ENCODE measurements at regions of chr11 and their contacts with region 1.

Region 1: GRCh38 chr11:123478352-123478987 is 48.4 kb downstream of the GRAMD1B start:
- DNase-seq: peak; percentile 71
- H3K4me3 Mint-ChIP-seq: no peak overlapping the region
- H3K27ac Mint-ChIP-seq: no peak overlapping the region
- H3K4me1 Mint-ChIP-seq: peaks cover 15% of the 10 kb centered on the region
- H3K27me3 Mint-ChIP-seq: no peaks in the 10 kb centered on the region
- CTCF ChIP-seq: peak; percentile 73

Region 2: DNA sequence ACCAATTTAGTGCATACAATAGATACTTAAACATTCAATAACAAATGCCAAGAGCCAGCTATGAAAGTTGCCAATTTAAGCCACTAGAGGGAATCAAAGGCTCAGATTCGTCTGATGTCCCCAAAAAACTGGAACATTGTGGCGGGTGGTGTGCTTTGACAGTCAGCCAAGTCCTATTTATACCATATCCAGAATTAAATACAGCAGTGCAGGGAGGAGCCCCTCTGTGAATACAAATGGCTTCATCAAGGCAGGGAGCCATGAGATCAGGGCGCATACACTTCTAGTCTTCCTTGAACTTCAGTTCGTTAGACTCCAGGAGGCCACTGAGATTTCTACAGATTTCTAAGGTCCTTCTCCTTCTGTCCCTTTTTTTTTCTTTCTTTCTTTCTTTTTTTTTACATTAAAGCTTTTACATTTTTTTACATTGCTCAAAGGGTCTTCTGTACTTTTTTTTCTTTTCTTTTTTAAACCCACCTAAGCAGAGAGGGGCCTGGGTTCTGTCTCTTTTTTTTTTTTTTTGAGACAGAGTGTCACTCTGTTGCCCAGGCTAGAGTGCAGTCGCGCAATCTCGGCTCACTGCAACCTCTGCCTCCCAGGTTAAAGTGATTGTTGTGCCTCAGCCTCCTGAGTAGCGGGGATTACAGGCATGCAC is 375.0 kb before region 1 on chr11:
- CTCF ChIA-PET with region 1: interaction called, 23 read pairs
- POLR2A ChIA-PET with region 1: no interaction called
- intact Hi-C with region 1: loop called (anchors 1 kb)
- DNase-seq: peak; percentile 69
- H3K4me3 Mint-ChIP-seq: no peak overlapping the region
- H3K27ac Mint-ChIP-seq: no peak overlapping the region
- H3K4me1 Mint-ChIP-seq: peaks cover 9% of the 10 kb centered on the region
- H3K27me3 Mint-ChIP-seq: no peaks in the 10 kb centered on the region
- CTCF ChIP-seq: peak; percentile 41

Region 3: GRCh38 chr11:123261345-123262106 is 216.9 kb before region 1 on chr11:
- CTCF ChIA-PET with region 1: interaction called, 14 read pairs
- POLR2A ChIA-PET with region 1: no interaction called
- intact Hi-C with region 1: no loop called
- DNase-seq: peak; percentile 80
- H3K4me3 Mint-ChIP-seq: peak overlapping the region; percentile 49
- H3K27ac Mint-ChIP-seq: no peak overlapping the region
- H3K4me1 Mint-ChIP-seq: no peaks in the 10 kb centered on the region
- H3K27me3 Mint-ChIP-seq: peaks cover 25% of the 10 kb centered on the region
- CTCF ChIP-seq: peak; percentile 90

Region 4: GRCh38 chr11:123301696-123302400 is 176.6 kb before region 1 on chr11:
- CTCF ChIA-PET with region 1: interaction called, 7 read pairs
- POLR2A ChIA-PET with region 1: no interaction called
- intact Hi-C with region 1: loop called (anchors 1 kb)
- DNase-seq: peak; percentile 40
- H3K4me3 Mint-ChIP-seq: no peak overlapping the region
- H3K27ac Mint-ChIP-seq: no peak overlapping the region
- H3K4me1 Mint-ChIP-seq: no peaks in the 10 kb centered on the region
- H3K27me3 Mint-ChIP-seq: peaks cover 20% of the 10 kb centered on the region
- CTCF ChIP-seq: peak; percentile 70

Region 5: DNA sequence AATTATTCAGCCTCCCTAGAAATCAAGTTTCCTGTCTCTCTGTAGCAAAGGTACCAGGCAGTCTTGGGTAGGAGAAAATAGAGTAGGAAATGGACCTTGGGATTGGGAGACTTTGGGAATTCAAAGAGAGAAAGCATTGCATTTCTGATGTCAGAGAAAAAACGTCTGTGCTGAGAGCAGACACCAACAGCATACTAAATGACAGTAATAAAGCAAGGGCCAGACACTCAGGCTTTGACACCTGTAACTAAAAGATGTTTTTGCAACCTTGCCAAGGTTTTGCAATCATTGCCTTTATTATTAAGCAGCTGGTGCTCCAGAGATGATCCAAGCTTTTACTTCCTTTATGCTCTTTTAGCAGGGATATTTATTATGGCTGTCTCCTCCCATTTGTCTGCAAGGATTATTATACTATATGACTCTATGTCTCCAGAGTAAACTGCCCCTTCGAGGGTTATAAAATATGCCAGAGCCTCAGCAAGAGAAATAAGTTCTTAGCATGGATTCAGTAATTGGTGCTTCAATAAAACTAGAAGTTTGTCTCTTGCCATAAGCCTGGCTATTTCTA is 133.6 kb before region 1 on chr11:
- CTCF ChIA-PET with region 1: no interaction called
- POLR2A ChIA-PET with region 1: no interaction called
- intact Hi-C with region 1: no loop called
- DNase-seq: peak; percentile 7
- H3K4me3 Mint-ChIP-seq: no peak overlapping the region
- H3K27ac Mint-ChIP-seq: no peak overlapping the region
- H3K4me1 Mint-ChIP-seq: no peaks in the 10 kb centered on the region
- H3K27me3 Mint-ChIP-seq: peaks cover 30% of the 10 kb centered on the region
- CTCF ChIP-seq: no peak

Region 6: GRCh38 chr11:123461164-123461563 is 17.3 kb before region 1 on chr11:
- CTCF ChIA-PET with region 1: interaction called, 18 read pairs
- POLR2A ChIA-PET with region 1: no interaction called
- intact Hi-C with region 1: no loop called
- DNase-seq: peak; percentile 85
- H3K4me3 Mint-ChIP-seq: no peak overlapping the region
- H3K27ac Mint-ChIP-seq: no peak overlapping the region
- H3K4me1 Mint-ChIP-seq: no peaks in the 10 kb centered on the region
- H3K27me3 Mint-ChIP-seq: no peaks in the 10 kb centered on the region
- CTCF ChIP-seq: no peak

Region 7: DNA sequence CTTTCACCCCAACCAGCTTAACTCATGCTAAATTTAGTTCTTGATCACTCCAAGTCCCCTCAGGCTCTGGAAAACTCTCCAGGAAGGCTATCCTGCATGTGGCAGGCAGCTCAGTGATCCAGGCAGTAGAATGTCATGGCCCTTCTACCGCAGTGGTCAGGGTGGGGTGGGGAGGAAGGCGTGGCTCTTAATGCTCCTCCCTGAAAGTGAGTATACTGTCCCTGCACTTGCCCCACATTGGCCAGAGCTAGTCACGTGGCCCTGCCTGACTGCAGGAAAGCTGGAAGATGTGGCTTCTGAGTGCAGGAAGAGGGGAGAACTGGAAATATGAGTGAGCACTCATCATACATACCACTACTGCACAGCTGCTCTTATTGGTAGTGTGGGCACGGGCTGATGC is 53.7 kb after region 1 on chr11:
- CTCF ChIA-PET with region 1: no interaction called
- POLR2A ChIA-PET with region 1: no interaction called
- intact Hi-C with region 1: no loop called
- DNase-seq: no peak
- H3K4me3 Mint-ChIP-seq: no peak overlapping the region
- H3K27ac Mint-ChIP-seq: no peak overlapping the region
- H3K4me1 Mint-ChIP-seq: no peaks in the 10 kb centered on the region
- H3K27me3 Mint-ChIP-seq: peaks cover 22% of the 10 kb centered on the region
- CTCF ChIP-seq: no peak

Region 8: DNA sequence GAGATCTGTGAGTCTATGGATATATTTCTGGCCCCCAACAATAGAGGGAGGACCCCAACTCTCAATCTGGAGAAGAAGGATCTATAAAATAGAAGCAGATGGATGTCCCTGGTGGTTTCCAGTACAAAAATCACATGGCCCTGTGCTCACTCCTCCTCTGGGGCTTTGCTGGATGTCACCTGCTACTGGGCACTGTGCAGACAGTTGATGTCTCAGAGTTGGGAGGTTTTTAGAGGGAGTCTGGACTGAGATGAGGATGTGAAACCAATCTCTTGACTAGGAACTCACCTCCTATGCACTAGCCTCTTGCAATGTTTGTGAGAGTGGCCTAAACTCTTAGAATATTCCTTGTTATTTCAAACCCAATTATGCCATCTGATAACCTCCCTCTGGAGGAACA is 68.7 kb after region 1 on chr11:
- CTCF ChIA-PET with region 1: no interaction called
- POLR2A ChIA-PET with region 1: no interaction called
- intact Hi-C with region 1: no loop called
- DNase-seq: no peak
- H3K4me3 Mint-ChIP-seq: no peak overlapping the region
- H3K27ac Mint-ChIP-seq: no peak overlapping the region
- H3K4me1 Mint-ChIP-seq: peaks cover 17% of the 10 kb centered on the region
- H3K27me3 Mint-ChIP-seq: peaks cover 10% of the 10 kb centered on the region
- CTCF ChIP-seq: no peak

Region 9: GRCh38 chr11:123624974-123625373 is 146.5 kb after region 1 on chr11:
- CTCF ChIA-PET with region 1: no interaction called
- POLR2A ChIA-PET with region 1: no interaction called
- intact Hi-C with region 1: no loop called
- DNase-seq: peak; percentile 11
- H3K4me3 Mint-ChIP-seq: no peak overlapping the region
- H3K27ac Mint-ChIP-seq: no peak overlapping the region
- H3K4me1 Mint-ChIP-seq: no peaks in the 10 kb centered on the region
- H3K27me3 Mint-ChIP-seq: peaks cover 30% of the 10 kb centered on the region
- CTCF ChIP-seq: no peak

Measured in MCF 10A (cell line).